Activated CD4-positive, alpha-beta memory T cell treated with anti-CD3 and anti-CD28 coated beads for 36 hours (primary cell): ENCODE measurements at regions of chr1 and their contacts with region 1.

Region 1: DNA sequence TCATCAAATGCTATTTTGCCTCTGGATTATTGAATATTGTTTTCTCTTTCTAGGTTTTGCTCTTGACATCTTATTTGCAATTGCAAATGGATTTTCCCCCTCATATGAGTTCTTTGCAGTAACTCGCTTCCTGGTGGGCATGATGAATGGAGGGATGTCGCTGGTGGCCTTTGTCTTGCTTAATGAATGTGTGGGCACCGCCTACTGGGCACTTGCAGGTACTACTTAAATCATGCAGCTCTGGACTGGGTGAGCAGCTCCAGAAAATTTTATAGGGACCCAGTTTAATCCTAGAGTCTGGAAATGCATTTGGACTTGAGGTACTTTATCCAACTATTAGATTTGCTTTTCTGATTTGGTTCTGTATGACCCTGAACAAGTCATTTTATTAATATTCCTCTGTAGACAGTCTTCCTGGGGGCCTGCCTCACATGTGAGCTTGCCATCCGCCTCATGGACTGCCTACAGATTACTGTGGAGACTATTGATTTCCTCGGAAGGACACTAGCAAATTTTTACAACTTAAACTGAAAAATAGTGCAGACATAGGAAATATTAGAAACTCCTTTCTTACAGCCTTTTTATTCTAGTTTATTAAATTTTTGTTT is 44.5 kb downstream of the SLC22A15 start:
- DNase-seq: peak; percentile 65
- H3K4me3 Mint-ChIP-seq: no peak overlapping the region
- H3K27ac Mint-ChIP-seq: no peak overlapping the region
- H3K4me1 Mint-ChIP-seq: no peaks in the 10 kb centered on the region
- H3K27me3 Mint-ChIP-seq: peaks cover 1% of the 10 kb centered on the region

Region 2: DNA sequence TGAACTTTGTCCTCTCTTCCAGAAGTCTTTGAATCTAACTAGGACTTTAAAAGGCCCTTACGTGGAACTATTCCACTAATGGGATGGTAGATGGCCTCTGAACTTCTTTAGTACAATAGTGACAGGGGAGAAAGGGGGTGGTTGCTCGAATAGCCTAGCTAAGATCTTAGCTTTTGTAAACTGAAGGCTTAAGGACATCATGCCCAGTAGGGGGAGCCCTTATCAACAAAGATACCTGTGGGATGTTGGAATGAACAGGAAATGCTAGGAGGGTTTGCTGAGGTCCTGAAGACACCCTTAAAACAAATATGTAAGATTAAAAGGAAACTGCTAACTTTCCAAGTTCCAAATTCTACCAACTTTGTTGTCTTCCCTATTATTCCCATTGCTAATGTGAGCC is 213.0 kb before region 1 on chr1:
- CTCF ChIA-PET with region 1: interaction called, 32 read pairs
- POLR2A ChIA-PET with region 1: no interaction called
- intact Hi-C with region 1: no loop called
- DNase-seq: peak; percentile 38
- H3K4me3 Mint-ChIP-seq: no peak overlapping the region
- H3K27ac Mint-ChIP-seq: no peak overlapping the region
- H3K4me1 Mint-ChIP-seq: no peaks in the 10 kb centered on the region
- H3K27me3 Mint-ChIP-seq: peaks cover 11% of the 10 kb centered on the region